ENCODE measurements at regions of chr11 and their contacts with region 1.

Region 1: DNA sequence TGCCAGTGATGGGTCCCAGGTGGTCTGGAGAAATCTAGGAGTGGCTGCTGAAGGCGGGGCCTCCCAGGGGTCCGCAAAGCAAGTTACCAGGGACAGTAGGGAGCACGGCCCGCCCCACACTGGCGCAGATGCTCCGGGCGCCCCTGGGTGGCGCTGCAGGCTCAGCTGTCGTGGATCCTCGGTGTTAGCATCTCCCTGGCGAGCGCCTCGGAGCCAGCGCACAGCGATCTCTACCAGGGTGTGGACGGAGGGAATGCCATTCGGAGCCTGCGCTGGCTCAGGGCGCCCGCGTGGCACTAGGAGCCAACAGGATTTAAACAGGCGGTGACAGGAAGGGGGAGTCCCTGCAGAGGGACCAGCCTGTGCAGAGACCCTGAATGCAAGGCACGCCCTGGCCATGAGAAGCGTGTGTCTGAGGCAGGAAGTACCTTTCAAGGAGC is 20.2 kb downstream of the FADS3 start:
- DNase-seq: peak; percentile 92
- H3K4me3 ChIP-seq: peak overlapping the region in 3 of 8 donors; percentile 14 to 44 (median 14)
- H3K27ac ChIP-seq: peak overlapping the region in 1 of 8 donors; percentile 11
- H3K4me1 ChIP-seq: peaks cover 7 to 22% (median 10%) of the 10 kb centered on the region in 6 donors
- H3K27me3 ChIP-seq: peaks cover 0 to 8% (median 0%) of the 10 kb centered on the region in 7 donors
- CTCF ChIP-seq: peak; percentile 78 to 92 (median 89)
- POLR2A ChIP-seq: no peak

Region 2: DNA sequence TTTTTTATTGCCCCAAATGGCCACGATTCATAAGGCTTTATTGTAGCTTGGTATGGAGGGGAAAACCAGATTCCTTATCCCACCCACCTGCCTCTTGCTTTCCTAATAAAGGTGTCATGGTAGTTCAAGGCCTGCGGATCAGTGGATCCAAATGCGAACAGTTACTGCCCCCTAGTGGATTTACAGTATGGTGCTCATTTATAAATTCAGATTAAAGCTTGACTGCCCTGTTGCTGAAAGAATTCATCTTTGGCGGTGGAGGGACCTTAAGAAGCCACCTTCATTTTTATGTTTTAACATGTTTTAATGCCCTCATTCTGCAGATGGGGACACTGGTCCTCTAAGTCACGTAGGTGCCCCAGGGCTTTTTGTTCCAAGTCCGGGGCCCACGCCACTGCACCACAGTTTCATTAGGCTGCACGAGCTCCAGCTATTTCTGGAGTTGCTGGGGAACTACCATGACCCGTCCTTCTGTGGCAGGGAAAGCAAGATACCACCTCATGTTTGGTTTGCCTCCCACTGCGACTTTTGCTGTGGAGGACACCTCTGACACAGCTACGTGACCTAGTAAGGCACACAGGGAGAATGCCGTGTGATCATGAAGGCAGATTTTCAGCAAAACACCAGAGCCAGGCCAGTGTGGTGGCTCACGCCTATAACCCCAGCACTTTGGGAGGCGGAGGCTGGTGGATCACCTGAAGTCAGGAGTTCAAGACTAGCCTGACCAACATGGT is 237.0 kb after region 1 on chr11:
- intact Hi-C with region 1: loop called (anchors 10 kb)
- DNase-seq: no peak
- H3K4me3 ChIP-seq: no peak overlapping the region
- H3K27ac ChIP-seq: no peak overlapping the region
- H3K4me1 ChIP-seq: peaks cover 5 to 47% (median 30%) of the 10 kb centered on the region in 6 donors
- H3K27me3 ChIP-seq: no peaks in the 10 kb centered on the region
- CTCF ChIP-seq: peak in 10 of 11 experiments; percentile 51 to 84 (median 80)
- POLR2A ChIP-seq: no peak

Region 3: DNA sequence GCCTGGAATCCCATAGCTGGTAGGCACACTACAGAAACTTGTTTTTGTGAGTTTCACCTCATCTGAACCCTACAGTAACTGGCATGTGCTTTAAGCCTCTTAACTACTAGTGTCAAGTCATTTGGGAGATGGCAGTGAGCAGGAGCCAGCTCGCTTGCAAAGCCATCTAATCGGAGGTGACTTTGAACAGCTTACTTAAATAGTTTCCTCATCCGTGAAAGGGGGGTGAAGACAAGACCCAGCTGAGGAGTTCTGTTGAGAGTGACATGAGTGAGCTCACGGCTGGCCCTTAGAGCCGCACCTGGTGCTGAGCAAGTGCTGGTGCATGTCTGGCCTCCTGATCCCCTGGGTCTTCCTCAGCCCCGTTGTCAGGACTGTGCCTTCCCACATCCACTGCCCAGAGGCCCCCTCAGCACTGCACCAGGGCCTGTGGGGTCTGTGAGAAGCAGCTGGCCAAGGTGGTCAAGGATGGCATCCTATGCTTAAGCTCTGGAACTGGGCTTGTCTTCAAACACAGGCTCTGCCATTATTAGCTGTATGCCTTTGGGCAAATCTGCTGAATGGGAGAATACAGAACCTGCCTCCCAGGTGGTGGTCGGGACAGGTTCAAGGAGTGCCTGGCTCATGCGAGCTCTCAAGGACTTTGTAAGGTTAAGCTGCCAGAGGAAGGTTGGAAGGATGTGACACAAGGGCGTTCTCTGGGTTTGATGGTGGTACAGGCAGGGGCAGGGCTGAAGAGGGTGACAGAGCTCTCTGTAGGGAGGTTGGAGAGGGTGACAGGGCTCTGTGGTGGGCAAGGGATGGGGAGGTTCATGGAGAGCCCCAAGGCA is 279.9 kb after region 1 on chr11:
- intact Hi-C with region 1: no loop called
- DNase-seq: peak; percentile 23
- H3K4me3 ChIP-seq: no peak overlapping the region
- H3K27ac ChIP-seq: no peak overlapping the region
- H3K4me1 ChIP-seq: no peaks in the 10 kb centered on the region
- H3K27me3 ChIP-seq: no peaks in the 10 kb centered on the region
- CTCF ChIP-seq: no peak
- POLR2A ChIP-seq: no peak

Region 4: DNA sequence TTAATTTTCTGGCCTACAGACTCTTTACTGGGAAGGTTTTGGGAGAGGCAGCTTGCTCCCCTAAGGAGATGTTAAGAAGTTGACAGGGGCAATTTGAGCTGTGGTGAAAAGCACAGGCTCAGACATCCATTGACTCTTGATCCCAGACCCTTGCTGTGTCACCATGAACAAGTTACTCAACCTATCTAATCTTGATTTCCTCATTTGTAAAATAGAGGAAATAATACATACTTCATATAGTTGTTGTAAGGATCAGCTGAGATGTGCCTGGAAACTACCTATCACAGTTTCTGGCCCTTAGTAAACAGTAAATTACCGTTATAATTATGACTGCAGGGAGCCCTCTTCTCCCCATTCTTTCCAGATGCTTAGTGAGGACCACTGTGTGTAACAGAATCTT is 444.3 kb after region 1 on chr11:
- intact Hi-C with region 1: no loop called
- DNase-seq: no peak
- H3K4me3 ChIP-seq: no peak overlapping the region
- H3K27ac ChIP-seq: no peak overlapping the region
- H3K4me1 ChIP-seq: peaks cover 0 to 15% (median 12%) of the 10 kb centered on the region in 6 donors
- H3K27me3 ChIP-seq: peaks cover 0 to 44% (median 0%) of the 10 kb centered on the region in 7 donors
- CTCF ChIP-seq: no peak
- POLR2A ChIP-seq: no peak